Esophagus squamous epithelium (tissue), 5 donors: ENCODE measurements at regions of chr4 and their contacts with region 1.

Region 1: GRCh38 chr4:42519803-42520417 is 122.6 kb downstream of the SHISA3 start:
- DNase-seq: no peak
- H3K4me3 ChIP-seq: no peak overlapping the region
- H3K27ac ChIP-seq: no peak overlapping the region
- H3K4me1 ChIP-seq: peaks cover 0 to 14% (median 0%) of the 10 kb centered on the region in 3 donors
- H3K27me3 ChIP-seq: no peaks in the 10 kb centered on the region
- CTCF ChIP-seq: peak; percentile 36 to 72 (median 62)
- POLR2A ChIP-seq: no peak

Region 2: DNA sequence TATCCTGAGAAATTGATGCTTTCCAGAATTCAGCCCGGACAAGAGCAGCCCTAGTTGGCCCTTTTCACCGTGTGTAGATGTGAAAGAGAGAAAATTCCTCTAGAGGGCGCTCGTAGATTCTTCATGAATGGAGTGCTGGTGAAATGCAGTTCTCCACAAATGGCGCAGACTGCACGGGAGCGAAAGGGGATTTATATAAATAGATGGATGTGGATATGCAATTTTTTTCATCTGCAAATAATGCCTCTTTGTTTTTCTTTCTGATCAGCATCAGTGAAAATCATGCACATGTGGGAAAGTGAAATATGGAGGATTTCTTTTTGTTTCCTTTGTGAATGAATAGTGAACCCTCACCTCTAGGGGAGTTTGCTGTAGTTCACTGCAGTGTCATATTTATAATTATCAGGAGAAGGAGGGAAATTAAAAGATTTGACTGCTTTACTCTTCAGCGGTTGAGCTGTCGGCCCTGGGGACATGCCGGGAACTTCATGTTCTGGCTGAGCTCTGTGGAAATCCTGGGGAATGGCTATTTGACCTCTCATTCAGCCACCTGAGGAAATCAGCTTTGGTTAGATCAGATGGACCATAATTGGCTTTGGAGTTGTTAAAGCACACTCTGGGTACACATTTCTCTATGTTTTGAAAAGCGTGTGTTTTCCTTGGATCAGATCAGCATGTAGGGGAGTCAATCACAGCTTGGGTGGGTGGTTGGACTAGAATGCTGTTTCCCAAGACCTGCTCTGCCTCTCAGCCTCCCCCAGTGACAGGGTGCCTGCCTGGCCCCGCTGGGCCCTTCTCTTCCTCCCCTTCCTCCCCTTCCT is 237.6 kb before region 1 on chr4:
- intact Hi-C with region 1: loop called (anchors 5 kb)
- DNase-seq: no peak
- H3K4me3 ChIP-seq: no peak overlapping the region
- H3K27ac ChIP-seq: no peak overlapping the region
- H3K4me1 ChIP-seq: peaks cover 0 to 12% (median 0%) of the 10 kb centered on the region in 3 donors
- H3K27me3 ChIP-seq: no peaks in the 10 kb centered on the region
- CTCF ChIP-seq: peak; percentile 43 to 73 (median 61)
- POLR2A ChIP-seq: no peak

Region 3: DNA sequence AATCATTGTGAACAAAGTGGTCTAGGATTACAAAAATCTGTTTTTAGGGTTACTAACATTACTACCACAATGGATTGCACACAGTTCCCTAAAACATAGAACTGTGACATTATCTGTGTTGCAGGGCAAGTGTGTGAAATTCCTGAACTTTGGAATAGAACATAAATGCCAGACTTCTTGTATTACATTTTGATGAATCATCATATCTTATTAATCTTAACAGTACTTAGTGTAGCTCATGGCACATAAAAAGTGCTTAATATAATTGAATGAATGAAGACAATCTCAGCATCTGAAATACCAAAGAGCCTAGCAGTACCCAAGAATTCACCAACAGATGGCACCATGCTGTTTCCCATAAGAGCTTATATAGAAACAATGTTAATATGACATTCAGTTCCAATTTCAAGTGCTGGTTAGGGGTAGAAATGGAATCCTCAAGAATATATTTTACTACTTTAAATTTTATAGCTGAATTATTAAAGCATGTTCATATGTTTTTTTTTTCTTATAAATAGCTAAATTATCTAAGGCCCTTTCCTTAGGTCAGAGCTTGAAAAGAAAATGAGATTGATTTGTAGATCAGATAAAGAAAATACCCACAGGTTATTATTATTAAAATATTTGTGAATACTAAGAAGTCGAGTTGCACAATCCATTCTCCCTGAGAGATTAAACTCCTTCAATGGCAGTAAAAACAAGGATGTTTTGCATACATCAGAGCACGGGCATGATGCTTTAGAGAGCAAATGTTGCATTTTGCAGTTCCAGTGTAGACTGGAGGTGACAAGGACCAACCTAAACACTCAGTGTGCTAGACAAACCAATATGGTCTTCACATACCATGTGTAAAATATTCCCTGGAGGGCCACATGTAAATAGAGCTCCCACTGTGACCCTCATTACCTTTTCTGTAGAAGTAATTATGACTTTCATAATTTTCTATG is 148.3 kb before region 1 on chr4:
- intact Hi-C with region 1: loop called (anchors 5 kb)
- DNase-seq: no peak
- H3K4me3 ChIP-seq: no peak overlapping the region
- H3K27ac ChIP-seq: no peak overlapping the region
- H3K4me1 ChIP-seq: no peaks in the 10 kb centered on the region
- H3K27me3 ChIP-seq: no peaks in the 10 kb centered on the region
- CTCF ChIP-seq: peak; percentile 17 to 58 (median 32)
- POLR2A ChIP-seq: no peak